Head of caudate nucleus (tissue), 42 donors: ENCODE measurements at regions of chr14 and their contacts with region 1.

Region 1: DNA sequence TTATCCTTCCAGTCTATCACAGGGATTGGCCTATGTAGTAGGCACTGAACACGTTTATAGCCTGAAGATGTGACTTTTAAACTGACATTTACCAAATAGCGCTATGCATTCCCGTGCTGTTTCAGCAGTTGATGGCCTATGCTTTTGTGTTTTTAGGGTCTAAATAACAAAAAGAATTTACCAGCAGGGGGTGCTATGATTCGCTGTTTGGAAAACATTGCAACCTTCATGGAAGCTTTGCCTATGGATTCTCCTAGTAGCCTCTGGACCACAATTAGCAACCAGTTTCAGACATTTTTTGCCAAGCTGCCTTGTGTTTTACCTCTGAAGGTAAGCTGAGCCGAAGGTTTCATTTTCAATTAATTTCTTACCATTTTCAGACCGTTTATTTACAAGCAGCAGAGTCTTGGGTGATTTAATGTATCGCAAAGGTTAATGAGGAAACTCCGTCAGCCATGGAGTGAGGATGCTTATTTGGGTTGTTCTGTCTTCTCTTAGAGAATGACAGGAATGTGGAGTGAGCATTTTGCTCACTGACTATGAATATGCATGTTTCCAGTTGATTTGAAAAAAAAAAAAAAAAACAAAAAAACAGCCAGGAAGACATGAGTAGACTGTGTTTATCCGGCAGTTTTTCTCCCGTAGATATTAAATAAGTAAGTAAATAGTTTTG is 133.1 kb downstream of the PRIMA1 start:
- DNase-seq: peak in 27 of 42 donors; percentile 10 to 86 (median 57)

Region 2: DNA sequence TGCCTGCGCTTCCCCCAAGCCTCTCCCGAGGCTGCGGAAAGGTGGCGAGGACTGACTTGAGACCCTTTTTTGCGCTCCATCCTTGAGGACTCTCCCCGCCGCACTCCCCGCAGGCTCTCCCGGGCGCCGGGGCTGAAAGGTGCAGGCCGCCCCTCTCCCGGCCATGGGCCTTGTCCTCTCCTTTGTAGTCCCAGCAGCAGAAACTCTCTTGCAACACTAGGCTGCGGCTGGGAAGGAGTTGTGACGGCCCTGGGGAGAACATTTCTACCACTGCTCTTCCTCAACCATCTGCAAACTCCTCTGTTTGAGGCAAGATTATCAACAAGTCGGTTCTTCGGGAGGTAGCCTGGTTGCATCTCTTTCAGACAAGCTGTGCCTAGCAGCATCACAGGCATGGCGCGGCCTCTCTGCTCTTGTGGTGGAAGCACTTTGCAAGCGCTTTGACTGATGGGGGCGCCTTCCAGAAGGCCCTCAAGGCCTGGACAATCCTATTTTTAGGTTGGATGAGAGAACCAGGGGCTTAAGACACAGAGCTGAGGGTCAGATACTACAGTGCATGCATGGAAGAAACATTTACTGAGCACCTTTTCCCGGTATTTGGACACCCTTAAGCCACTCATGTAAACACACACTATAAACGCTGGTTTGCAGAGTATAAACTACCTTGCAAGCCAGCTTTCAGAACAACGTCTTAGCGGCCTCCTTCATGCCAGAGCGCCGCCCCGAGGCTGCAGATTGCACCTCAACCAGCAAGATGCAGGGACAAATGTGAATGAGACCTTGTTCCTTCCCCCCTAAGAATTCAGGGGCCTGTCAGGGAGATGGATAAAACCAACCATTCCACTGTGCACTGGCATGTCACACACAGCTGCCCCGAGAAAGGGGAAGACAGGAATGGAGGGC is 134.3 kb after region 1 on chr14:
- intact Hi-C with region 1: loop called (anchors 2 kb)
- DNase-seq: peak in 3 of 42 donors; percentile 15 to 43 (median 21)

Region 3: GRCh38 chr14:93862265-93862955 is 207.2 kb after region 1 on chr14:
- intact Hi-C with region 1: no loop called
- DNase-seq: no peak